ENCODE measurements at regions of chrX and their contacts with region 1.

Region 1: DNA sequence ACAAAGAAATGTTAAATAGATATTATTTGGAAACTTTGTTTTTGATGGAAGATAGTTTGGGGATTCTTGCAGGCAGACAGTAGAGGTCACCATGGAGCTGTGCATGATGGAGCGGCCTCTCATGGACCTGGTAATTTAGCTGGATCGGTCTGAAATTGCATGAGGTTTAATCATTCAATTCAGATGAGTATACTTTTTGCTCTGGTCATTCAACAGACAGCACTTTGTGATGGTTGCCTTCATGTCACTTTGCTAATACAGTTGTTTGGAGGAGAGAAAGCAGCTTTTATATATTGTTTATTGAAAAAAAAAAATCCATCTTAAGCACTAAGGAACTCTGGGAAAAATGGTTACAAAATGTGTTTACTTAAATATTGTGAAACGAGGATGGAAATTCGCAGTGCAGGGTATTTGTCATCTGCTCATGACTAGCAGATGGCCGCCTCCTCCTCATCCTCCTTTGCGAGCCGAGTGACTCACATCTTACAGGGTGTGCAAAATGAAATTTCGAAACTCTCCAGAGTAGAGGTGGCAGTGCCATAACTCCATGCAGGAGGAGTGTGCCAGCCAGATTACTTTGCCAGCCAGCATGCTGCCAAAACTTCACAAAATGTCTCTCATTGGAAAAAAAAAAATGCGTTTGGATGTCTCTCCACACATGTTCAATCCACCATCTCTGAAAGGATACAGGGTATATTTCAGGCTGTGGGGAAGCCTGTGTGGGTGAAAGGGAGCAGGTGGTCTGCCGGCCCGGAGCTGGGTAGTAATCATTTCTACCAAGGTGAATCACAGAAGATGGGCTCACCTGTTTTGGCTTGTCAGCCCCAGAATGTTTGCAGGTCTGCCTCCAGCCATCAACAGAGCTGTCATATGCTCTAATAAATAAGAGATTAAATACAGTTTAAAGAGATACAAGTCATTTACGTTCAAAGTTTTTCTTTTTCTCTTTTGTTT is 314.9 kb upstream of the DIPK2B start:
- DNase-seq: peak; percentile 15 to 30
- ATAC-seq: peak; percentile 59 to 94 (median 77)
- H3K4me3 ChIP-seq: no peak overlapping the region
- H3K27ac ChIP-seq: no peak overlapping the region
- H3K4me1 ChIP-seq: peaks cover 0 to 11% (median 0%) of the 10 kb centered on the region in 9 donors
- H3K27me3 ChIP-seq: peaks cover 0 to 41% (median 0%) of the 10 kb centered on the region in 7 donors
- CTCF ChIP-seq: peak; percentile 19 to 76 (median 61)

Region 2: DNA sequence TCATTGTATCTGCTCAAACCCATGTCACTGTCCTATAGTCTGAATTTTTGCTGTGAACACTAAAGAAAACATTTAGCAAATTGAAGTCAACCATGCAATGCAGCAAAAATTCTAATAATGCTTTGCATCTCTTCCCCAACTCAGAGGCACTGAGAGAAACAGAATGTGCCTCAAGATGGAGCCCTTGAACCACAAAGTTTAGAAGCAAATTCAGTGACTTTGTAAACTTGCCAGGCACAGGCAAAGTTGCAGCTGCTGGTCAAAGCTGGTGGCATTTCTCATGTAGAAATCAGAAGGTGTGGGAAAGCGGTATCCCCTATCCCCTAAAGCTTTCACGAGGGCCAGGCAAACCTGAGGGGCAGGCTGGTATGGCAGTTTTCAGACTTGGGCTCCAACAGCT is 193.2 kb before region 1 on chrX:
- intact Hi-C with region 1: loop called in 1 of 10 experiments (anchors 10 kb)
- DNase-seq: peak in 1 of 2 donors; percentile 23
- ATAC-seq: peak in 1 of 8 donors; percentile 44
- H3K4me3 ChIP-seq: no peak overlapping the region
- H3K27ac ChIP-seq: no peak overlapping the region
- H3K4me1 ChIP-seq: no peaks in the 10 kb centered on the region
- H3K27me3 ChIP-seq: peaks cover 0 to 35% (median 0%) of the 10 kb centered on the region in 7 donors
- CTCF ChIP-seq: peak in 8 of 9 donors; percentile 17 to 54 (median 50)

Region 3: GRCh38 chrX:45385757-45386156 is 129.8 kb before region 1 on chrX:
- intact Hi-C with region 1: no loop called
- DNase-seq: no peak
- ATAC-seq: no peak
- H3K4me3 ChIP-seq: no peak overlapping the region
- H3K27ac ChIP-seq: no peak overlapping the region
- H3K4me1 ChIP-seq: no peaks in the 10 kb centered on the region
- H3K27me3 ChIP-seq: peaks cover 0 to 10% (median 0%) of the 10 kb centered on the region in 7 donors
- CTCF ChIP-seq: no peak

Region 4: DNA sequence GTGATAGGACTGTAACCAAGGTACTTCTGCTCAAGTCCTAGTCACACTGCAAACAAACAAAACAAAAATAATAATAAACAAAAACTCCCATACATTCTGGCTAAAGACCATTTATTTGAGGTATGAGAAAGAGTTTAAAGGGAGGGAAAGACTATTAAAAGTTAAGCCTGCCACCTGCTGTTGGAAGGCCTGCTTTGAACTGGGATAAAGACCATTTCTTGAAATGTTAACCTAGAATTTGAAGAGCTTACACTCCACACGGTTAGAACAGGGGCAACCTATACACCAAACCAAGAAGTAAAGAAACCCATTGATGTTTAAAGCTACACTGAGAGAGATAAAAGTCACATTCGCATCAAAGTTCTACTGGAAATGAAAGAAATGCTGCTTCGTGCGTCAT is 233.8 kb after region 1 on chrX:
- intact Hi-C with region 1: loop called in 5 of 10 experiments (anchors 5 to 10 kb)
- DNase-seq: no peak
- ATAC-seq: peak in 3 of 8 donors; percentile 38 to 60 (median 58)
- H3K4me3 ChIP-seq: peak overlapping the region in 7 of 10 donors; percentile 14 to 46 (median 33)
- H3K27ac ChIP-seq: peak overlapping the region in 6 of 10 donors; percentile 11 to 72 (median 63)
- H3K4me1 ChIP-seq: peaks cover 0 to 32% (median 8%) of the 10 kb centered on the region in 9 donors
- H3K27me3 ChIP-seq: peaks cover 0 to 45% (median 0%) of the 10 kb centered on the region in 7 donors
- CTCF ChIP-seq: peak in 6 of 9 donors; percentile 23 to 47 (median 42)

Region 5: DNA sequence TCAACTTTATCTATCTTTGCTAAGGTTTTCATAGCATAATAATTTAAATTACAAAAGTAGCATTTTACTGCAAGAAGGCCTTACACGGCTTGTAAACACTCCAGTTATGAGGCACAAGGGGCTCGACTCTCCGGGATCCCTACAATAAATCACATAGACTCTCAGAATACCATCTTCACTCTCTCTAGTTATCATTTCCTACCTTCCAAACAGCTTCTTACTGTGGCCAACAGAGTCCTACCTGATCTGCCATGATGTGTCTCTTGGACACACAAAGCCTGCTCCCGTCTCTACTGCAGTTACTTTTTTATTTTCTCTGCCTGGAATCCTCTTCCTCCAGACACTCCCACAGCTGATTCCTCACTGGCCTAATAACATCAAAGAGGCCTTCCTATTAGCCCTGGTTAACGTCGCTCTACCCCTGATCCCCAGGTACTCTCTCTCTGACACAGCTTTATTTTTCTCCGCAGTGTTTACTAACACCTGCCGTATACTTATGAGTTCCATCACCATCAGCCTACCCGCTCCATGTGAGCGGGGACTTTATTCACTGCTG is 244.7 kb after region 1 on chrX:
- intact Hi-C with region 1: no loop called
- DNase-seq: no peak
- ATAC-seq: no peak
- H3K4me3 ChIP-seq: no peak overlapping the region
- H3K27ac ChIP-seq: peak overlapping the region in 1 of 10 donors; percentile 85
- H3K4me1 ChIP-seq: peaks cover 0 to 87% (median 0%) of the 10 kb centered on the region in 9 donors
- H3K27me3 ChIP-seq: peaks cover 0 to 29% (median 0%) of the 10 kb centered on the region in 7 donors
- CTCF ChIP-seq: no peak

Region 6: DNA sequence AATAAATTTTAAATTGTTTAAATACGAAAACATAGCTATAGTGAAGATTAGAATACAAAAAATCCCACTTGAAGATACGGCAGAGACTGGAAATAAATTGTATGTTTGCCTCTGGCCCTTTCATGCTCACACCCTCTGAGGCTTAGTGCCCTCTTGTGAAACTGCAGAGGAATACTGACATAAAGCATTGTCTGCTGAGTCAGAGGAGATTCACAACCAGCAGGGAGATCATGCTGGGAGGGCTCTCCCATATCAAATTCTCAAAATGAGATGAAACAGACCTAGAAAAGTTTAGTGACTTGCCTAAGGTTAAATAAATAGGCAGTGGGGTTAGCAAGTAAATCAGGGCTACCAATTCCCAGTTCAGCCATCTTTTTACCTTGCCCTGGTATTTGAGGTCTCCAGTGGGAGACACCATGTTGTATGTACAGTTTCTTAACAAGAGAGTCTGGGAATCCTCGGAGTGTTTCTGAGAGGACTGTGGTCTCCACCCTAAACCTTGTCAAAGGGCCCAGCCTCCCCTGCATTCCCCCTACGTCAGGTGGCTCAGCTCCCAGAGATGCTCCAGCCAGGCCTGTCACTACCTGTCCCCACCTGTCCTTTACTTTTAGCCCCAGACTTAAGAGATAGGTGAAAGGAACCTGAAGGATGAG is 266.5 kb after region 1 on chrX:
- intact Hi-C with region 1: loop called in 2 of 10 experiments (anchors 10 kb)
- DNase-seq: no peak
- ATAC-seq: peak in 3 of 8 donors; percentile 55 to 64 (median 63)
- H3K4me3 ChIP-seq: no peak overlapping the region
- H3K27ac ChIP-seq: no peak overlapping the region
- H3K4me1 ChIP-seq: peaks cover 0 to 22% (median 0%) of the 10 kb centered on the region in 9 donors
- H3K27me3 ChIP-seq: peaks cover 0 to 56% (median 0%) of the 10 kb centered on the region in 7 donors
- CTCF ChIP-seq: peak in 5 of 9 donors; percentile 24 to 45 (median 40)

Region 7: DNA sequence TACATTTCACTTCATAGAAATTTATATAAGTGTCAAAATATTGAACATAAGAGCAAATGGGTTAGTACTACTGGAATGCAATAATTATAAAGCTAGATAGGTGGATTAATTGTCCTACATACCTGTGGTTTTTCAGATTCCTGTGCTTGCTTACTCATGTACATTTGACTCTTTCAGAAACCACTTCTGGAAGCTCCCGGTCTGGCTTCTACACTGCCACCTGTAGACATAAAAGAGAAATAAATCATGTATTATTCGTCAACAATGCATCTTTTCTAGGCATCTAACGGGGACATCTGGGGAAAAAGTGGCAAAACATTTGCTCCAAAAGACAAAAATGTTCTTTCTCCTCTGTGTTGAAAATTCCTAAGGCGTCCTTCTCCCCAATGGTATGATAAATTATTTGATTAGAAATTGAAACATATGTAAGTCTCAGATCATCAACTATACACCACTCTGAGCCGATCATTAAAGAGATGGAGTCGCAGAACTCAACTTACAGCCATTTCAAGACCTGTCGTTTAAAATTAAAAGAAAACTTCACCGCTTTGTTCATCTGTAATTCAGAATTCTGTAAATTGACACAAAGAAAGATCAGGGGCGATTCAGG is 333.8 kb after region 1 on chrX:
- intact Hi-C with region 1: loop called in 5 of 10 experiments (anchors 5 to 10 kb)
- DNase-seq: peak in 1 of 2 donors; percentile 2
- ATAC-seq: no peak
- H3K4me3 ChIP-seq: peak overlapping the region in 2 of 10 donors; percentile 5 to 12
- H3K27ac ChIP-seq: no peak overlapping the region
- H3K4me1 ChIP-seq: peaks cover 0 to 5% (median 0%) of the 10 kb centered on the region in 9 donors
- H3K27me3 ChIP-seq: peaks cover 0 to 87% (median 0%) of the 10 kb centered on the region in 7 donors
- CTCF ChIP-seq: peak in 7 of 9 donors; percentile 8 to 49 (median 40)

Region 8: DNA sequence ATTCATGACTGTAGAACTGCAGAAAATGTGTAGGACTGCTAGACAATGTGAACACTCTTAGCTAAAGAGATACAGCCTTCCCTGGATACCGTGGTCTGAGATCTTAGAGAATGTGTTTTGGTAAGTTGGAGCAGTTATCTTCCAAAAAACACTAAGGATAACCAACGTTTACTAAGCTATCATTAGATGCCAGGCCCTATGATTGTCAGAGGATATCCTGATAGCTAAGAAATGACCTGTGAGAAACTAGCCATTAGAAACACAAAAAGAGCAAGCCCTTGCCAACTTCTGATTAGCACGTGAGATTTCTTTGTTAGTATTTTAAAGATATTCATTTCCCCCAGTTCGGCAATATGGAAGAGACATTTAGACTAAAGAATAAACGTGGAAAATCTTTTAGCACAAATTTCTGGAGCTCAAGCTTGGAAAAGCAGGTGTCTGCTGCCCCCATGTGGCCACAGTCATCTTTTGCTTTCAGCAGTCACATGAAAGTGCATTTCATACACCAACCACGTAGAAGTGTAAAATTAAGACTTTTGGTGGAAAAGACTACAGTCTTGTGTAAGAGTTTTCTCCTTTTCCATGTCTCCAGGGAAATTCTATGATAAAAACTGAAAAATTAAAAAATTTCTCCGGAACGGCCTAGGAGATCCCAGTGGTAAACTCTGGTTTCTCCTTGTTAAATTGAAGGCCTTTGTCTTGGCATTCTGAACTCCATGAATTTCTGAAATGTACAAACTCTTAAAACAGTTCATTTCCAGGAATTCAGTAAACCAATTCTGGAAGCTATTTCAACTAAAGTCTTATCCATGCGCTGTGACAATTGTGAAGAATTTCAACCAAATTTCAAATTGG is 893.2 kb after region 1 on chrX:
- intact Hi-C with region 1: loop called in 3 of 10 experiments (anchors 5 to 10 kb)
- DNase-seq: peak; percentile 54 to 59
- ATAC-seq: no peak
- H3K4me3 ChIP-seq: no peak overlapping the region
- H3K27ac ChIP-seq: no peak overlapping the region
- H3K4me1 ChIP-seq: no peaks in the 10 kb centered on the region
- H3K27me3 ChIP-seq: peaks cover 0 to 24% (median 0%) of the 10 kb centered on the region in 7 donors
- CTCF ChIP-seq: peak; percentile 36 to 89 (median 69)

Measured in heart right ventricle (tissue), 16 donors.